AG04450 (cell line): ENCODE measurements at regions of chr9 and their contacts with region 1.

Region 1: GRCh38 chr9:121545875-121546423 is 46.3 kb upstream of the GGTA1 start:
- DNase-seq: peak; percentile 89
- H3K4me3 ChIP-seq: peak overlapping the region; percentile 27
- H3K27ac ChIP-seq: no peak overlapping the region
- H3K27me3 ChIP-seq: peaks cover 9% of the 10 kb centered on the region
- CTCF ChIP-seq: peak; percentile 94

Region 2: DNA sequence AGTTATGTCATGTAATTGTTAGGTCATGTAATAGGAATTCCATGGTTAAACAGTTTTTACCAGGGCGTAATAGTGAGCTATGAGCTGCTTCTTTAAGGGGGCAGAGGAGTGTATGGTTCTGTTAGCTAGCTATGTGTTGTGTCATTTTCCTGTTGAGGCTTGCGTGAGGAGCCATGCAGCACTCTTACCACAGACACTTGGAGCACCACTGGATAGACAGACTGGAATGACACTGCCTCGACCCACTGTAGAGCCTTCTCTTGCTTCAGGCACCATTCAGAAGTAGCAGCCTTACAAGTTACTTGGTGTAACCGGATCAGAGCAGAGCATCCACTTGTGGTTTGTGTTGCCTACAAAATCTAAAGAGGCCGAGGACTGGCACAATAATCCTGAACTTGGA is 147.6 kb before region 1 on chr9:
- CTCF ChIA-PET with region 1: no interaction called
- POLR2A ChIA-PET with region 1: no interaction called
- DNase-seq: peak; percentile 97
- H3K4me3 ChIP-seq: no peak overlapping the region
- H3K27ac ChIP-seq: peak overlapping the region; percentile 89
- H3K27me3 ChIP-seq: no peaks in the 10 kb centered on the region
- CTCF ChIP-seq: 0 out of 2 replicates have a peak, but pooled peaks have one; percentile 1

Region 3: GRCh38 chr9:121609845-121610570 is 64.1 kb after region 1 on chr9:
- CTCF ChIA-PET with region 1: interaction called, 10 read pairs
- POLR2A ChIA-PET with region 1: no interaction called
- DNase-seq: peak; percentile 55
- H3K4me3 ChIP-seq: no peak overlapping the region
- H3K27ac ChIP-seq: no peak overlapping the region
- H3K27me3 ChIP-seq: no peaks in the 10 kb centered on the region
- CTCF ChIP-seq: no peak

Region 4: DNA sequence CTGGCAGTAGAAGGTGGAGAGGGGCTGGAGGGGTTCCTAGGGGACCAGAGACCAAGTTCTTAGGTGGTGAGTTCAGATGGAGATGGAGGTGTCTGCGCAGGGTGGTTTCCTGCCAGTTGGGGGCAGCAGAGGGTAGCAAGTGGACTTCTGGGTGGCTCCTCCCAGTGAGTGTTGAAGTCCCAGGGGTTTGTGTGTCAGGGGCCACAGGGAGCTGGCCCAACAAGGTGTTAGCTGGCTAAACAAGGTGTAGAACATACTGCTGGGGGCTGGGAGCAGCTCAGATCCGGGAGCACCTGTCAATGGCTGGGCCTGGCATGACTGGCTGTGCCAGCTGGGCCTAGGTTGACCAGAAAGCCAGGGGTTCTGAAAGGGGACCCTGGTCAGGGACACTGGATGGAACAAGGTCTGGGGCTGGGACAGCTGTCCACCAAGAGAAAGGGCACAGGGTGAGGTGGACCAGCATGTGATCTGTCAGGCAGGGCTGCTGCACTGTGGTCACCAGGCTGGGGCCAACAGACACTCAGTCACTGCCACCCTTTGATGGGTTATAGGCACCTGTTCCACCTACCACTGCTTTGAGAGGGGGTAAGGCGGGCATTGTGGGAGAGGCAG is 141.1 kb after region 1 on chr9:
- CTCF ChIA-PET with region 1: interaction called, 44 read pairs
- POLR2A ChIA-PET with region 1: interaction called, 5 read pairs
- DNase-seq: peak; percentile 30
- H3K4me3 ChIP-seq: no peak overlapping the region
- H3K27ac ChIP-seq: no peak overlapping the region
- H3K27me3 ChIP-seq: no peaks in the 10 kb centered on the region
- CTCF ChIP-seq: peak; percentile 92

Region 5: GRCh38 chr9:121921444-121921843 is 375.5 kb after region 1 on chr9:
- CTCF ChIA-PET with region 1: interaction called, 17 read pairs
- POLR2A ChIA-PET with region 1: no interaction called
- DNase-seq: no peak
- H3K4me3 ChIP-seq: no peak overlapping the region
- H3K27ac ChIP-seq: no peak overlapping the region
- H3K27me3 ChIP-seq: no peaks in the 10 kb centered on the region
- CTCF ChIP-seq: no peak

Region 6: GRCh38 chr9:121997791-121998190 is 451.8 kb after region 1 on chr9:
- CTCF ChIA-PET with region 1: interaction called, 11 read pairs
- POLR2A ChIA-PET with region 1: no interaction called
- DNase-seq: no peak
- H3K4me3 ChIP-seq: no peak overlapping the region
- H3K27ac ChIP-seq: no peak overlapping the region
- H3K27me3 ChIP-seq: no peaks in the 10 kb centered on the region
- CTCF ChIP-seq: no peak

Region 7: DNA sequence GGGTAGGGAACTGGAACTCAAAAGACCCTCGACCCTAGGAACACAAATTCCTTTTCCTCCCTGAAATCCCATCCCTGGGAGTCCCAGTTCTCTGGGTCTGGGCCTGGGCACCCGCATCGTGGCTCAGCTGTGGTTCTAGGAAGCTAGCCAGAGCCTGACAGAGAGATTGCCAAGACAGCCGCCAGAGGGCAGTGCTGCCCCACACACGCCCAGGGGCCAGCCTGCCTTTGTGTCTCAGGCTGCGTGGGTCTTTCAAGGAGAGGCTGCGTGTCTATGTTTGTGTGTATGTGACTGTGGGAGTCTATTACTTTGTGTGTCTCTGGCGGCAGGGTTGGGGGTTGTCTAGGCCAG is 579.2 kb after region 1 on chr9:
- CTCF ChIA-PET with region 1: interaction called, 21 read pairs
- POLR2A ChIA-PET with region 1: no interaction called
- DNase-seq: peak; percentile 47
- H3K4me3 ChIP-seq: no peak overlapping the region
- H3K27ac ChIP-seq: no peak overlapping the region
- H3K27me3 ChIP-seq: peaks cover 2% of the 10 kb centered on the region
- CTCF ChIP-seq: peak; percentile 97